ENCODE measurements at regions of chr3 and their contacts with region 1.

Region 1: GRCh38 chr3:132709761-132710160 is 12.4 kb downstream of the NPHP3 start:
- DNase-seq: no peak
- H3K4me3 ChIP-seq: no peak overlapping the region
- H3K27ac ChIP-seq: no peak overlapping the region
- H3K4me1 ChIP-seq: no peaks in the 10 kb centered on the region
- H3K27me3 ChIP-seq: no peaks in the 10 kb centered on the region
- CTCF ChIP-seq: no peak

Region 2: DNA sequence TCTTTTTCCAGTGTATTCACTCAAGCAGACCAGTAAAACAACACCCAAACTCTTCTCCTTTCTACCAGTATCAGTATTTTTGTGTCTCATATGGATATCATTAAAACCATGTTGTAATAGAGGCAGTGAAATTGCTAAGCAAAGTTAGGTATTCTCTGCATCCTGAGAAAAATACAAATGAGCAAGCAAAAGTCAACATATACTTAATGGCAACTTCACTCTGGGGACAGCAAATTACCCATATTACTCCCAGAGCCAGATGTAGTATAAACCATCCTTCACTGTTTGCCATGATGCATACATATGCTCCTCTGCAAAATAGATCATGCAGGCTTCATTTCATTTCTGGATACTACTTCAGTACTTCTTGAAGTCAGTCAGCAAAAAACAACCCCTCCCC is 27.6 kb before region 1 on chr3:
- CTCF ChIA-PET with region 1: no interaction called
- dilution Hi-C with region 1: no loop called
- in situ Hi-C with region 1: no loop called
- intact Hi-C with region 1: loop called (anchors 1 kb)
- DNase-seq: no peak
- H3K4me3 ChIP-seq: no peak overlapping the region
- H3K27ac ChIP-seq: no peak overlapping the region
- H3K4me1 ChIP-seq: no peaks in the 10 kb centered on the region
- H3K27me3 ChIP-seq: no peaks in the 10 kb centered on the region
- CTCF ChIP-seq: no peak

Measured in mammary epithelial cell (primary cell).